GM12878 (cell line): ENCODE measurements at regions of chrX and their contacts with region 1.

Region 1: GRCh38 chrX:150715184-150715583 is 22.0 kb downstream of the MTMR1 start:
- DNase-seq: no peak
- ATAC-seq: no peak
- H3K4me3 ChIP-seq: no peak overlapping the region
- H3K27ac ChIP-seq: no peak overlapping the region
- H3K4me1 ChIP-seq: 0 out of 2 replicates have a peak, but pooled peaks cover 3% of the 10 kb centered on the region
- H3K27me3 ChIP-seq: no peaks in the 10 kb centered on the region
- CTCF ChIP-seq: no peak
- EP300 ChIP-seq: no peak
- POLR2A ChIP-seq: no peak
- RAD21 ChIP-seq: no peak

Region 2: DNA sequence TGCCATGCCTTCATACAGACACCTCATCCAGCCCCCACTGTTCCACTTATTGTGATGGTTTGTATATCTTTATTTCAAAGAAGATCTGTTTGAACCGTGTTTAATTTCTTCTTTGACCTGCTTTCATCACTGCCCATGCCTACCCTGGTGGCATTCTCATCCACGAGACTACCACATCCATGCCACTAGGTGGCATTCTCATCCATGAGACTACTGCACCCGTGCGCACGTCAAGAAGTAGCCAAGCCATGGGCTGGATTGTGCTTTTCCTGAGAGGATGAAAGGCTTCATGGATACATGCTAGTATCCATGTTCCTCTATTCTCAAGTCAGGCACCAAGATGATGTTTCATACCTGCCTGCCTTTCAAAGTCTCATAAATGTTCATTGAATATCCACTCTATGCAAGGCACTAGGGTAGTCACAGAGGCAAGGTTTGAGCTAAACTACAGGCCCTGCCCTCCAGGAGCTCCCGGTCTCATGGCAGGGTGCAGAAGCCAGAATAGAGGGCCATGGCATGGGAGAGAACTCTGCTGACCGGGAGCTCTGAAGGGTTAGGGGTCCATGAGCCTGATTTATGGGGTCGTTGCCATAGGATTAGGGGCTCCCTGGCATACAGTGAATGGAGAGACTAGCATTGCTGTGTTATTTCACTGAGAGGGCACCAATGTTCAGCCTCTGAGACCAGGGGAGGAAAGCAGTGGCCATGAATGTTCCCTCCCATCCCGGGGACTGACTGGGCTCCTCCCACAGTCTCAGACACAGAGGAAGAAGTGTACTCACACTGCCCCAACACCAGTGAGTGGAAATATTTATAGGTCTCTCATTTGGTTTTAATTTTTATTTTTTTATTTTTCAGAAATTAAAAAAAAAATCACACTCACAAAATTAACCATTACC is 752.1 kb before region 1 on chrX:
- CTCF ChIA-PET with region 1: interaction called, 6 read pairs
- POLR2A ChIA-PET with region 1: no interaction called
- RAD21 ChIA-PET with region 1: no interaction called
- SMC1A ChIA-PET with region 1: no interaction called
- in situ Hi-C with region 1: loop called (anchors 10 kb)
- intact Hi-C with region 1: loop called (anchors 1 kb)
- DNase-seq: peak; percentile 5
- ATAC-seq: peak; percentile 98
- H3K4me3 ChIP-seq: no peak overlapping the region
- H3K27ac ChIP-seq: no peak overlapping the region
- H3K4me1 ChIP-seq: no peaks in the 10 kb centered on the region
- H3K27me3 ChIP-seq: no peaks in the 10 kb centered on the region
- CTCF ChIP-seq: peak; percentile 70 to 76 (median 71)
- EP300 ChIP-seq: no peak
- POLR2A ChIP-seq: no peak
- RAD21 ChIP-seq: peak; percentile 76

Region 3: GRCh38 chrX:150525061-150525919 is 189.9 kb before region 1 on chrX:
- CTCF ChIA-PET with region 1: no interaction called
- POLR2A ChIA-PET with region 1: no interaction called
- RAD21 ChIA-PET with region 1: no interaction called
- SMC1A ChIA-PET with region 1: no interaction called
- in situ Hi-C with region 1: no loop called
- intact Hi-C with region 1: no loop called
- DNase-seq: no peak
- ATAC-seq: no peak
- H3K4me3 ChIP-seq: no peak overlapping the region
- H3K27ac ChIP-seq: no peak overlapping the region
- H3K4me1 ChIP-seq: no peaks in the 10 kb centered on the region
- H3K27me3 ChIP-seq: no peaks in the 10 kb centered on the region; a peak in 1 of 4 replicates
- CTCF ChIP-seq: no peak
- EP300 ChIP-seq: no peak
- POLR2A ChIP-seq: no peak
- RAD21 ChIP-seq: no peak

Region 4: DNA sequence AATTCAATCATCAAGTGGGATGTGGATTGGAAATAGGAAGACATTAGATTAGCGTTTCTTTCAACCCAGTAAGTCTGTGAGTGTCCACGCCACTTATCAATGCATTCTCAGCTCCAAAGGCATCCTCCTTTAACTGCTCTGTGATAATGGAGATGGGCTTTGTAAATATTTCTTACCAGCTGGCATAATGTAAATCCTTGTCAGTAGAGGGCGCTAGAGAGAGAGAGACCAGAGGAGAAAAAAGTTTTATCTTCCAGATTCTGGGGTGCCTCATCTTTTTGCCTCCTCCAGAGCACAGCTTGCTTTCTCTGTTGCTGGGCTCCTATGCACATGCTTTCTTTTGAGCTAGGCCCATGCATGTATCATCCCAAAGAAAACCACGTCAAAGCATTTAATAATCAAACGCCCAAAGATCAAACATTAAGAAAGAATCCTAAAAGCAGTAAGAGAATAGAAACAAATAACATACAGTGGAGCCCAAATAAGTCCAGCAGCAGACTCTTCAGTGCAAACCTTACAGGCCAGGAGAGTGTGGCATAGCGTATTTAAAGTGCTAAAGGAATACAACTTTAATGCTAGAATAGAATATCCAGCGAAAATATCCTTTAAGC is 31.5 kb before region 1 on chrX:
- CTCF ChIA-PET with region 1: interaction called, 68 read pairs
- POLR2A ChIA-PET with region 1: no interaction called
- RAD21 ChIA-PET with region 1: interaction called, 28 read pairs
- SMC1A ChIA-PET with region 1: interaction called, 132 read pairs
- in situ Hi-C with region 1: no loop called
- intact Hi-C with region 1: loop called (anchors 1 kb)
- DNase-seq: no peak
- ATAC-seq: peak; percentile 76
- H3K4me3 ChIP-seq: no peak overlapping the region
- H3K27ac ChIP-seq: no peak overlapping the region
- H3K4me1 ChIP-seq: no peaks in the 10 kb centered on the region
- H3K27me3 ChIP-seq: no peaks in the 10 kb centered on the region
- CTCF ChIP-seq: peak; percentile 54 to 64 (median 55); a peak in 5 of 6 replicates
- EP300 ChIP-seq: no peak
- POLR2A ChIP-seq: no peak
- RAD21 ChIP-seq: peak; percentile 60

Region 5: GRCh38 chrX:150704030-150704613 is 11.1 kb before region 1 on chrX:
- CTCF ChIA-PET with region 1: interaction called, 106 read pairs
- POLR2A ChIA-PET with region 1: no interaction called
- RAD21 ChIA-PET with region 1: interaction called, 16 read pairs
- SMC1A ChIA-PET with region 1: interaction called, 26 read pairs
- in situ Hi-C with region 1: no loop called
- intact Hi-C with region 1: no loop called
- DNase-seq: no peak
- ATAC-seq: no peak
- H3K4me3 ChIP-seq: no peak overlapping the region
- H3K27ac ChIP-seq: no peak overlapping the region
- H3K4me1 ChIP-seq: no peaks in the 10 kb centered on the region
- H3K27me3 ChIP-seq: no peaks in the 10 kb centered on the region
- CTCF ChIP-seq: no peak
- EP300 ChIP-seq: no peak
- POLR2A ChIP-seq: no peak
- RAD21 ChIP-seq: no peak